ENCODE measurements at regions of chr7 and their contacts with region 1.

Region 1: DNA sequence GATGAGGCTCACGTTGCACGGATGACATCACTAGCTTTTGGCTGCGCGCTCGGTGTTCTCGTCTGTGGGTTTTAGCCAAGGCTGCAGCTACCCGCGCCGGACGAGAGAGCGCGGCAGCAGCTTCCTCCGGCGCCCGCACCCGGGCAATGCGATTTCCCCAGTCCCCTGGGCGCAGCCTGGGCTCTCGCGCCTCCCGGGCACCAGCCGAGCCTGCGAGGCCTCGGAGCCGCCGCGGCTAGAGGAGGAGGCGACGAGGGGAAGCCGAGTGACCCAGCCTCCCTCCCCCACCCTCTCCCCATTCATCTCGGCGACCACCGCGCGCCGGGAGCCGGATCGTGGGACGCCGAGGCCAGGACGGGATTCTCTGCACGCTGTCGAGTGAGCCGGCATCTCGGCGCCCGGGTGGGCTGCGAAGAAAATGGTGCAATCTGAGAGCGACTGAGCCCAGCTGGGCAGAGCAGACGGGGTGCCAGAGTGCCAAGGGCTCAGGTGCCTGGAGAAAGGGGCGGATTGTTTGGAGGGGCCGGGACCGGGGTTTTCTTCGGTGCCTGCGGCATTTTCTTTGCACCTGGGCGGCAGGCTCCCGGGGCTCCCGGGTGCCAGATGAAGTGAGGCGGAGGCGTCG is 1.2 kb upstream of the TMEM178B start:
- DNase-seq: no peak
- ATAC-seq: no peak
- H3K4me3 Mint-ChIP-seq: peak overlapping the region; percentile 67
- H3K27ac Mint-ChIP-seq: no peak overlapping the region
- H3K4me1 Mint-ChIP-seq: peaks cover 26% of the 10 kb centered on the region
- H3K27me3 Mint-ChIP-seq: peaks cover 48% of the 10 kb centered on the region
- CTCF ChIP-seq: no peak

Region 2: GRCh38 chr7:141027043-141027442 is 45.6 kb before region 1 on chr7:
- CTCF ChIA-PET with region 1: no interaction called
- POLR2A ChIA-PET with region 1: no interaction called
- intact Hi-C with region 1: no loop called
- DNase-seq: no peak
- ATAC-seq: no peak
- H3K4me3 Mint-ChIP-seq: no peak overlapping the region
- H3K27ac Mint-ChIP-seq: no peak overlapping the region
- H3K4me1 Mint-ChIP-seq: no peaks in the 10 kb centered on the region
- H3K27me3 Mint-ChIP-seq: peaks cover 42% of the 10 kb centered on the region
- CTCF ChIP-seq: no peak

Region 3: DNA sequence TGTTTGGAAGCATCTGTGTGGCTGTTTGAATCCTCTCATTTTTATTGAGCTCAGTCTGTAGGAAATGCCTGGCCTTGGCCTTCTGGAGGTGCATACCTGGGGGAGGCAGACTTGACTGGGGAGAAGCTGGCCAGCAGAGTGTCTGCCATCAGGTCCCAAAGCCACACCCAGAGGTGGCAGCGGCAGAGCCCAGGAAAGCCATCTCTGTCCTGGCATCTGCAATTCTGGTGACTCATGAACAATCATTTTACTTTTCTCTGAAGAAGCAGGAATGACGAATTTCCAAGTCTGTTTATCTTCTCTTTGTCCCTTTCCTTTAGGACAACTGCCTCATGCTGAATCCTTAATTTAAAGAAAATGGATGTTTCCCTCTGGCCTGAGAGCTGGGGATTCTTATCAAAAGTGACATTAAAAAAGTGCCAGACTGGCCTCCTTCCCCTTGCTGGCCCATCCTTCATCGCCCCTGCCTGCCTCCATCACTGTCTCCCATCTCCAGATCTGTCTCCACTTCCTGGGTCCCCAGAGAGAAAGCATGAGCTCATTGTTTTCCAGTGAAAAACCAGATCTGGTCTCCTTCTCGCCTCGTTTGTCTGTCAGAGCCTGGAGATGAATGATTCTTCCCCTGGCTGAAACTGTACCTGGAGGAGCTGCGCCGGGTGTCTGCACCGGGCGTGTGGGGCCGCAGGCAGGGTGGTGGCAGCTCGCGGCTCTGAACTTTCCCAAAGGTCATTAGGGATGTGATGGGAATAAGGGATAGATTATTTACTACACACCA is 125.7 kb after region 1 on chr7:
- CTCF ChIA-PET with region 1: no interaction called
- POLR2A ChIA-PET with region 1: no interaction called
- intact Hi-C with region 1: loop called (anchors 10 kb)
- DNase-seq: no peak
- ATAC-seq: no peak
- H3K4me3 Mint-ChIP-seq: no peak overlapping the region
- H3K27ac Mint-ChIP-seq: no peak overlapping the region
- H3K4me1 Mint-ChIP-seq: peaks cover 14% of the 10 kb centered on the region
- H3K27me3 Mint-ChIP-seq: peaks cover 9% of the 10 kb centered on the region
- CTCF ChIP-seq: no peak

Measured in activated B cell treated with CpG ODN at 0.5 μM for 24 hours (primary cell).